Activated B cell treated with CpG ODN at 0.5 μM for 24 hours (primary cell): ENCODE measurements at regions of chrX and their contacts with region 1.

Region 1: DNA sequence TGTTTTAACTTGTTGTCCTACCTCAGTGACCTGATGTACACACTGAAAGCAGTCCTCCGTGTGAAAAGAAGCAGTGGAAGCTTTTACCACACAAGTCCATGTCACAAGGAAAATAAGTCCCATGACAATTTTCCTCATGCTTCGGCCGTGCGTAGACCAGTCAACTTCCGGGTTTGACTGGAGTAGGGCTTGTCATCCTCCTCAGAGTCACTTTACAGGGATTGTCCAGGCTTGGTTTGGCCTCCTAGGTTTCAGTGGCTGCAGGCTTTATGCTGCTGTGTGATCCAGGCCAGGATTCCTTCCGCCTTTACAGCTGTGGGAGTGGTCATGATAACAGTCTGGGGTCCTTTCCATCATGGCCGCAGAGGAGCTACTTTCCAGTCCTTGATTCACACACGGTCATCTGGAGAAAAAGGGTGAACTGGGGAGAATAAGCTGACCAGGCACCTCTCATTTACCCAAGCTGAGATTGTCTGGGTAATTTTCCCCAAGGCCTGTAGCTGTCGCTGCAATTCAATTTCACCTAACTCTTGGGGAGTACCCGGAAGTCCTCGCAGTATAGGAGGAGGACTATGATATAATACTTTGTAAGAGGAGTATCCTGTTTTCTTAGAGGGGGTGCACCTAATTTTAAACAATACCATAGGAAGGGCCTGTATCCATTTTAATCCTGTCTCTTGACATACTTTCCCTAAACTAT is 206.1 kb upstream of the KLF8 start:
- DNase-seq: no peak
- ATAC-seq: no peak
- H3K4me3 Mint-ChIP-seq: no peak overlapping the region
- H3K27ac Mint-ChIP-seq: no peak overlapping the region
- H3K4me1 Mint-ChIP-seq: peaks cover 16% of the 10 kb centered on the region
- H3K27me3 Mint-ChIP-seq: no peaks in the 10 kb centered on the region
- CTCF ChIP-seq: no peak

Region 2: DNA sequence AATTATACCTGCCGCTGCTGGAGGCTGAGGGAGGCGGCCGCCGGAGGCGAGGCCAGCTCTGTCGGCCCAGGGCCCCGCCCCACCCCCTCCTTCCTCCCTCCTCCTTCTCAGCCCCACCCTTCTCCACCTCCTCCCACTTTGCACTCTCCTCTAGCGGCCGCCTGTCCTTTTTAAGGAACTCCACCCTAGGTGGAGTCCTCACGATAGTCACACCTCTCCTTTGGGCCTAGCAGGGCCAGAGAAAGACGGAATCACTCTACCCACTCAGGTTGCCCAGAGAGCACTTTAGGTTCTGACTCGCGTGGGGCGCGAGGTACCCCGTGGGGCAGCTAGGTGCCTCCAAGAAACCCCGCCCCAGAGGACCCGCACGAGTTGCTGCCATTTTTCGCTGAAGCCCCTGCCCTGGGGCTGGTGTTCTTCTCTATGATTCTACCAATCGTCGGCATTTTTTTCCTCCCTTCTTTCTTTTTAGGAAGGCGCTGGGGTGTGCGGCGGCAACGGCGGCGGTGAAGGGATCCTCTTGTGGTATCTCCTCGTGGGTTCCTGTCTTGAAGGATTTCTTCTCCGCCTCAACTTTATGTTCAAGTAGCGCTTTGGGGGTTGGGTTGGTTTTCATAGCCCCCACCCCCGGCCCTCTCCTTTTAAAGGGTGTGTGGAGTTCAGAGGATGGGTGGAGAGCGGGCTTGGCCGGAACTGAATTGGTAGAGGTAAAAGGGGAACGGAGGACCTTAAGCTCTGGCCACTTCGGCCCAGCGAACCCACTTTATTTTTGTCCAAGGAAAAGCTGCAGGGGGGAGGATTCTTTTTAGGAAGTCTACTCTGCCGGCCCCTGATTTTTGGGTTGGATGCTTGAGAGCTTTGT is 206.4 kb after region 1 on chrX and contains the start of gene KLF8:
- CTCF ChIA-PET with region 1: no interaction called
- POLR2A ChIA-PET with region 1: no interaction called
- intact Hi-C with region 1: loop called (anchors 10 kb)
- DNase-seq: peak; percentile 25
- ATAC-seq: peak; percentile 83
- H3K4me3 Mint-ChIP-seq: peak within 1 kb of the TSS; percentile 88
- H3K27ac Mint-ChIP-seq: peak within 1 kb of the TSS; percentile 83
- H3K4me1 Mint-ChIP-seq: peaks cover 38% of the 10 kb centered on the region
- H3K27me3 Mint-ChIP-seq: no peaks in the 10 kb centered on the region
- CTCF ChIP-seq: no peak
- total RNA-seq, gene KLF8: 15.2 and 17.8 TPM in 2 replicates